GM12878 (cell line): ENCODE measurements at regions of chr6 and their contacts with region 1.

Region 1: GRCh38 chr6:143510991-143511891 is at the start of gene FUCA2:
- DNase-seq: peak; percentile 51
- ATAC-seq: peak; percentile 80
- H3K4me3 ChIP-seq: peak within 1 kb of the TSS; percentile 70
- H3K27ac ChIP-seq: peak within 1 kb of the TSS; percentile 83
- H3K4me1 ChIP-seq: peaks cover 26% of the 10 kb centered on the region
- H3K27me3 ChIP-seq: no peaks in the 10 kb centered on the region
- CTCF ChIP-seq: no peak
- EP300 ChIP-seq: no peak
- POLR2A ChIP-seq: peak; percentile 87
- RAD21 ChIP-seq: no peak
- polyA plus RNA-seq, gene FUCA2: 5.7 to 11.8 TPM

Region 2: DNA sequence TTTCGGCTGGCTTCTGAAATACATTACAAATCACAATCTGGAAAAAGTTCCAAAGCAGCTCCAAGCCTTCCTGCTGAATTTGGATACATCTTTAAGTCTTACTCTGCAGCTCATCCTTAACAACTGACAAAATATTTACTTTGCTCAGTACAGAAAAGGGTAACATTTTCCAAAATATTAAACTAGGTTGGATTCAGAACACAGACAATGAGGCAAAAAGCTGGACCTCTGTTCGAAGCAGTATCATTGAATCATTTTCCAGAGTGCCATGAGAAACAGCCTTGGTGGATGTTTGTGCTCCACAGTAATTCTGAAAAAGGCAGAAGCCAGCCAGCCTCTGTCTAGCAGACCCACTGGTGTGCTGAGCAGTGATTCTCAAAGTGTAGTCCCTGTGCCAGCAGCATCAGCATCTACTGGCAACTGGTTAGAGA is 288.4 kb before region 1 on chr6:
- CTCF ChIA-PET with region 1: no interaction called
- POLR2A ChIA-PET with region 1: no interaction called
- RAD21 ChIA-PET with region 1: no interaction called
- SMC1A ChIA-PET with region 1: no interaction called
- in situ Hi-C with region 1: no loop called
- intact Hi-C with region 1: no loop called
- DNase-seq: no peak
- ATAC-seq: no peak
- H3K4me3 ChIP-seq: no peak overlapping the region
- H3K27ac ChIP-seq: no peak overlapping the region
- H3K4me1 ChIP-seq: no peaks in the 10 kb centered on the region
- H3K27me3 ChIP-seq: no peaks in the 10 kb centered on the region
- CTCF ChIP-seq: no peak
- EP300 ChIP-seq: no peak
- POLR2A ChIP-seq: no peak
- RAD21 ChIP-seq: no peak

Region 3: GRCh38 chr6:143232849-143233248 is 278.4 kb before region 1 on chr6:
- CTCF ChIA-PET with region 1: no interaction called
- POLR2A ChIA-PET with region 1: no interaction called
- RAD21 ChIA-PET with region 1: no interaction called
- SMC1A ChIA-PET with region 1: interaction called, 3 read pairs
- in situ Hi-C with region 1: no loop called
- intact Hi-C with region 1: loop called (anchors 10 kb)
- DNase-seq: peak; percentile 2
- ATAC-seq: peak; percentile 89
- H3K4me3 ChIP-seq: no peak overlapping the region
- H3K27ac ChIP-seq: no peak overlapping the region
- H3K4me1 ChIP-seq: no peaks in the 10 kb centered on the region
- H3K27me3 ChIP-seq: no peaks in the 10 kb centered on the region
- CTCF ChIP-seq: peak; percentile 62 to 70 (median 67)
- EP300 ChIP-seq: no peak
- POLR2A ChIP-seq: no peak
- RAD21 ChIP-seq: peak; percentile 82

Region 4: DNA sequence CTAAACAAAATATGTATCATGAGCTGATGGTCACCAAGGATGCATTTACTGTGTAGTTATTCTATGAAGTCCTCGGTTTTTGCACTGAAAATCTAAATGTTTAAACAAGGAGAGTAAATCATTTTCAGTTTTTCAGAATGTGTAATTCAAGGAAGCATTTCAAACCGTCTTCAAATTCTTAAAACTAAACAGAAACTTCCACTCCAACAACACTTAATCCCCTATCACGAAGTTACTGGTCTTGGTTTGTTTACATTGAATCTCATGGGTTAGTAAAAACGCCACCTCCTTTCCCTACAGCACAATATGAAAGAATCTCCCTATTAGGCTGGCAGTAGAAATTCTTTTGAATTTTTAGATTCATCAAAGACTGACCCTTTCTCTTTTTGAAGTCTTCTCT is 257.7 kb before region 1 on chr6:
- CTCF ChIA-PET with region 1: no interaction called
- POLR2A ChIA-PET with region 1: no interaction called
- RAD21 ChIA-PET with region 1: no interaction called
- SMC1A ChIA-PET with region 1: no interaction called
- in situ Hi-C with region 1: no loop called
- intact Hi-C with region 1: no loop called
- DNase-seq: no peak
- ATAC-seq: no peak
- H3K4me3 ChIP-seq: no peak overlapping the region
- H3K27ac ChIP-seq: no peak overlapping the region
- H3K4me1 ChIP-seq: no peaks in the 10 kb centered on the region
- H3K27me3 ChIP-seq: no peaks in the 10 kb centered on the region
- CTCF ChIP-seq: no peak
- EP300 ChIP-seq: no peak
- POLR2A ChIP-seq: no peak
- RAD21 ChIP-seq: no peak

Region 5: GRCh38 chr6:143279385-143279784 is 231.9 kb before region 1 on chr6:
- CTCF ChIA-PET with region 1: no interaction called
- POLR2A ChIA-PET with region 1: no interaction called
- RAD21 ChIA-PET with region 1: no interaction called
- SMC1A ChIA-PET with region 1: no interaction called
- in situ Hi-C with region 1: no loop called
- intact Hi-C with region 1: no loop called
- DNase-seq: no peak
- ATAC-seq: peak; percentile 83
- H3K4me3 ChIP-seq: no peak overlapping the region
- H3K27ac ChIP-seq: no peak overlapping the region
- H3K4me1 ChIP-seq: peaks cover 7% of the 10 kb centered on the region; the same call in 1 of the 2 replicates
- H3K27me3 ChIP-seq: no peaks in the 10 kb centered on the region
- CTCF ChIP-seq: peak; percentile 37 to 58 (median 52); a peak in 4 of 6 replicates
- EP300 ChIP-seq: no peak
- POLR2A ChIP-seq: no peak
- RAD21 ChIP-seq: peak; percentile 69

Region 6: DNA sequence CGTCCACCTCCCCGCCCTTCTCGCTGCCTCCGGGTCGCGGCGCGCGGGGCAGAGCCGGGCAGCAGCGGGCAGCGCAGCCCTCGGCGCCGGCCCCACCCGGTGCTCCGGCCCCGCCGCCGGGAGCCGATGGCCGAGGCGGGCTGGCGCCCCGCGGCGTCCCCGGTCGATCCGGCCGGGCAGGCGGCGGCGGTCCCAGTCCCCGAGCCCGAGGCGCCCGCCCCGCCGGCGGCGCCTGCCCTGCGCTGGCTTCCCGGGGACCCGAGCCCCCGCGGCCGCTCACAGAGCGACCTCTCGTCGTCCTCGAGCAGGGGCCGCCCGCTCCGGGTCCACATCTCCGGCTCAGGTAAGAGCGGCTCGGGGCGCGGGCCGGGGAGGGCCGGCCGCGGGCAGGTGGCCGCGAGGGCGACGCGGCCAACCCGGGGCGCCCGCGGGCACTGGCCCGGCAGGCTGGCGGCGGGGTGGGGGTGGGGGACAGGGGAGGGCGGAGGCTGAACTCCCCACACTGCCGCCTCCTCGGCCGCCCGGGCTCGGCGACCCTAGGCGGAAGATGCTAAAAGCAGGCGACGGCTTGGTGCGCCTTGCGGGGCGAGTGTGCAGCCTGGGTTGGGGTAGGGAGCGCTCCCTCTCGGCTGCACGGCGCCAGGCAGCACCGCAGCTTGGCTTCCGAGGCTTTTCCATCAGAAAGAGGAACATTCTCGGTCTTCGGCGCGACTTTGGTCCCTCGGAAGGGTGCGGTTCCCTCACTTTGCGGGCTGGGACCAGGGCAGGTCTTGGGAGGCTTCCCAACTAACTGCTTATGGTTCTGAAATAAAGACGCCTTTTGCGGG is 25.8 kb after region 1 on chr6:
- CTCF ChIA-PET with region 1: interaction called, 18 read pairs
- POLR2A ChIA-PET with region 1: interaction called, 3 read pairs
- RAD21 ChIA-PET with region 1: interaction called, 8 read pairs
- SMC1A ChIA-PET with region 1: interaction called, 12 read pairs
- in situ Hi-C with region 1: no loop called
- intact Hi-C with region 1: no loop called
- DNase-seq: no peak
- ATAC-seq: peak; percentile 71
- H3K4me3 ChIP-seq: peak overlapping the region; percentile 80
- H3K27ac ChIP-seq: peak overlapping the region; percentile 24; the same call in 1 of the 2 replicates
- H3K4me1 ChIP-seq: peaks cover 31% of the 10 kb centered on the region
- H3K27me3 ChIP-seq: peaks cover 0 to 1% of the 10 kb centered on the region in 2 experiments; a peak in 2 of 4 replicates
- CTCF ChIP-seq: peak; percentile 27 to 41 (median 37); a peak in 4 of 6 replicates
- EP300 ChIP-seq: no peak
- POLR2A ChIP-seq: peak; percentile 45; the same call in 1 of the 2 replicates
- RAD21 ChIP-seq: peak; percentile 20; the same call in 1 of the 2 replicates

Region 7: GRCh38 chr6:143569040-143569439 is 57.8 kb after region 1 on chr6:
- CTCF ChIA-PET with region 1: interaction called, 44 read pairs
- POLR2A ChIA-PET with region 1: interaction called, 4 read pairs
- RAD21 ChIA-PET with region 1: interaction called, 7 read pairs
- SMC1A ChIA-PET with region 1: interaction called, 35 read pairs
- in situ Hi-C with region 1: no loop called
- intact Hi-C with region 1: loop called (anchors 2 kb)
- DNase-seq: no peak
- ATAC-seq: no peak
- H3K4me3 ChIP-seq: no peak overlapping the region
- H3K27ac ChIP-seq: no peak overlapping the region
- H3K4me1 ChIP-seq: peaks cover 4% of the 10 kb centered on the region
- H3K27me3 ChIP-seq: no peaks in the 10 kb centered on the region; a peak in 2 of 4 replicates
- CTCF ChIP-seq: no peak
- EP300 ChIP-seq: no peak
- POLR2A ChIP-seq: no peak
- RAD21 ChIP-seq: no peak

Region 8: DNA sequence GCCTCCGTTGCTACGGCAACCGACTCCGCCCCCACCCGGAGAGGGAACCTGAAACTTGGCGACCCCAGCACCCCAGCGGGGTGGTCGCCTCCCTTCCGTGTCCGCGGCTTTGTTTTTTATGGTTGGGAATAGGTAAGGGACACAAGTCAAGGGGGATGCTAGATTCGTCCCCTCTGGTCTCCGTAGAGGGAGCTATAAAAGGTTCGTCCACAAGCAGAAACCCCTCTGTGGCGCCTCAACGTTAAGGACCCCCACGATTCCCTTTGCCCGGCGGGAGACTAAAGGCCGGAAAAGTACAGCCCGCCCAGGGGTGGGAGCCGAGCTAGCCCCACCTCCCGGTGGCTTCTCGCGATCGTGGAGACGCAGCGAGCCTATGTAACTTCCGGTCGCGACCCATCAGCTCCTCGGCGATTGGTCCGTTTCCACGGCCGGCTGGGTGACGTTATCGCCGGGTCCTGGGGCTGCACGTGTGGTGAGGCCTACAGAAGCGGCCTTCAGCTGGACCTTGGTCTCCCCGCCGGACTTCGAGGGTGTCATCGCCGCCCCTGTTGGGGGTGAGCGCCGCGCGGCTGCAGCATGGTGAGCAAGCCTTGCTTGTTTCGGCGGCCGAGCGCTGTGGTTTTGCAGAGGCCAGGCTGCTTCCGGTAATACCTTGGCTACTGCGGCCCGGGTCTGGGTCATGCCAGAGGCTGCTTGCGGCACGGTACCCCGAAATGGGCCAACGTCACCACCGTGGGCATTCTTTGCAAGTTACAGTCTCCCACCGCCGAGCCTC is 331.8 kb after region 1 on chr6 and contains the start of gene LTV1:
- CTCF ChIA-PET with region 1: interaction called, 4 read pairs
- POLR2A ChIA-PET with region 1: interaction called, 3 read pairs
- RAD21 ChIA-PET with region 1: no interaction called
- SMC1A ChIA-PET with region 1: interaction called, 3 read pairs
- in situ Hi-C with region 1: no loop called
- intact Hi-C with region 1: loop called (anchors 5 kb)
- DNase-seq: peak; percentile 81
- ATAC-seq: peak; percentile 99
- H3K4me3 ChIP-seq: peak within 1 kb of the TSS; percentile 88
- H3K27ac ChIP-seq: peak within 1 kb of the TSS; percentile 78
- H3K4me1 ChIP-seq: no peaks in the 10 kb centered on the region
- H3K27me3 ChIP-seq: no peaks in the 10 kb centered on the region
- CTCF ChIP-seq: no peak
- EP300 ChIP-seq: no peak
- POLR2A ChIP-seq: peak; percentile 85
- RAD21 ChIP-seq: no peak
- polyA plus RNA-seq, gene LTV1: 33.9 to 57.9 TPM